Activated CD8-positive, alpha-beta memory T cell treated with anti-CD3 and anti-CD28 coated beads, Interleukin-2, amount 10 ng/mL, durations not matched to agents 7 days and 5 days (primary cell): ENCODE measurements at regions of chr17 and their contacts with region 1.

Region 1: DNA sequence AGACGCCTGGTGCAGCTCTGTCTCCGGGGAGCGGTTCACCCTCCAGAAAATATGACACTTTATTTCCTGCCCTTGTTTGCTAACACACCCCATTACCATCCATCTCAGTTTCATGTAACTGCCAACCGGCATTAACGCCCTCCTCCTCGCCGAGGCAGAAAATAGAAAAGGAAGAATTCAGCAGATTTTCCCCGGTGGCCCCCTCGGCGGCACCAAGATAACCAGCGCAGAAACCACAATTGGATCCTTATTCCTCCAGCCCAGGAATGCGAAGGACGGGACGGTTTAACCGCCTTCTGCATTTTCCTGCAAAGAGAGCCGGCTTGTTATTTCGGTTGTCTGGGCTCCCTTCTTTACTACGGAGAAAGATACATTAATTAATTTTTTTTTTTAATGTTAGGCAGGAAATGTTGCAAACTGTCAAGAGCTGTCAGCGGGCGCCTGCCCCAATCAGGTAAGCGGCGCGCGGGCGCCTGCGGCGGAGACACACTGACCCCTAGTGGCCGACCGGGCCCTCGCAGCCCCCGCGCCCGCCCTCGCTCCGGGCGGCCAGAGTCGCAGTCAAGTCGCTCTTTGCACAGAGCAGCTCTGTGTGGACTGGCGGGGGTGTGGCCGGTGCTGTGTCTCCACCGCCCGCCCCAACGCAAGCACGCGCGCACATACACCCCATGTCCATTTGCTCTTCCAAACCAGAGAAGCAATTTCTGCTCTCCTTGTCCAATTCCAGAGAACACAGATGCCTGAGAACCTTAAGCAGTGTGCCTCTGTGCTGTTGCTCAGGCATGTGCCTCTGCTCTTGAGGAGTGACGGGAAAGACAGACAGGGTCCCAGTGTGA is 53.6 kb downstream of the C17orf67 start:
- DNase-seq: peak; percentile 89
- ATAC-seq: peak; percentile 97
- H3K4me3 Mint-ChIP-seq: peak overlapping the region; percentile 77
- H3K27ac Mint-ChIP-seq: peak overlapping the region; percentile 76
- H3K4me1 Mint-ChIP-seq: peaks cover 19% of the 10 kb centered on the region
- H3K27me3 Mint-ChIP-seq: peaks cover 31% of the 10 kb centered on the region

Region 2: GRCh38 chr17:56592487-56593085 is 187.5 kb before region 1 on chr17:
- CTCF ChIA-PET with region 1: interaction called, 39 read pairs
- DNase-seq: peak; percentile 59
- ATAC-seq: peak; percentile 75
- H3K4me3 Mint-ChIP-seq: no peak overlapping the region
- H3K27ac Mint-ChIP-seq: no peak overlapping the region
- H3K4me1 Mint-ChIP-seq: peaks cover 19% of the 10 kb centered on the region
- H3K27me3 Mint-ChIP-seq: peaks cover 64% of the 10 kb centered on the region

Region 3: DNA sequence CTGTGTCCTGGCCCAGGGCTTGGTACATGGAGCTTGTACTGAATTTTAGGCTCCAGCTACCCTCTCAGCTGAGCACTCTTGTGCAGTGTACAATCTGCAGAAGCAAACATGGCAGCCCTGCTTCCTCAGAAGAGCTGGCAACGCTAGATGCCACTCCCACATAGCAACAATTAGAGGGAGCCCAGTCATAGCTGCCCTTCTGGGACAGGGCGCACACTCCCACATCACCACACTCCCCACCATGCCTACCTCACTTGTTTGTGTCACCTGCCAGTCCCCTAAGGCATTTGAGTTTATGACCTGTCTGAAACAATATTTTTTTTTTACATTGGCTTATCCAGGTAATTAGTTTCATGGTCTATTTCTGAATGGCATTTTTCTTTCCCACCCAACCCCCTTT is 18.7 kb before region 1 on chr17:
- CTCF ChIA-PET with region 1: interaction called, 10 read pairs
- DNase-seq: no peak
- ATAC-seq: no peak
- H3K4me3 Mint-ChIP-seq: no peak overlapping the region
- H3K27ac Mint-ChIP-seq: no peak overlapping the region
- H3K4me1 Mint-ChIP-seq: peaks cover 6% of the 10 kb centered on the region
- H3K27me3 Mint-ChIP-seq: peaks cover 23% of the 10 kb centered on the region

Region 4: DNA sequence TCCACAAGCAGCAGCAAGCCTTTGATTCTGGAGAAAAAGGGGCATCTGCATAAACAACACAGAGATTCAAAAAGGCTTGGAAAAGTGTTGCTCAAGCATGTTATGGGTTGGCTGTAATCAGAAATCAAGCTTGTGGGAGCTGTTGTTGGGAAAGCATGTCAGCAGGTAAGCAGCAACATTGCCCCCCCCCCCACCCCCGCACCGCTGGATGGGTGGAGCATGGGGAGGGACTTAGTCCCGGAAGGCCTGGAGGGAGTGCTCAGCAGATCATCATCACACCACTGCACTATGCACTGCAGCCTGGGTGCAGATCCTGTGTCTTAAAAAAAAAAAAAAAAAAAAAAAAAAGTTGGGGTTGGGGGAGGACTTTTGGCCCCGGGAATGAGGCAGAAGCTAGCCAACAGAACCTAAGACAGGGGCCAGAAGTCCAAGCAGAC is 288.1 kb after region 1 on chr17:
- CTCF ChIA-PET with region 1: no interaction called
- DNase-seq: no peak
- ATAC-seq: no peak
- H3K4me3 Mint-ChIP-seq: no peak overlapping the region
- H3K27ac Mint-ChIP-seq: no peak overlapping the region
- H3K4me1 Mint-ChIP-seq: no peaks in the 10 kb centered on the region
- H3K27me3 Mint-ChIP-seq: peaks cover 30% of the 10 kb centered on the region